Right cardiac atrium (tissue), 5 donors: ENCODE measurements at regions of chr7 and their contacts with region 1.

Region 1: DNA sequence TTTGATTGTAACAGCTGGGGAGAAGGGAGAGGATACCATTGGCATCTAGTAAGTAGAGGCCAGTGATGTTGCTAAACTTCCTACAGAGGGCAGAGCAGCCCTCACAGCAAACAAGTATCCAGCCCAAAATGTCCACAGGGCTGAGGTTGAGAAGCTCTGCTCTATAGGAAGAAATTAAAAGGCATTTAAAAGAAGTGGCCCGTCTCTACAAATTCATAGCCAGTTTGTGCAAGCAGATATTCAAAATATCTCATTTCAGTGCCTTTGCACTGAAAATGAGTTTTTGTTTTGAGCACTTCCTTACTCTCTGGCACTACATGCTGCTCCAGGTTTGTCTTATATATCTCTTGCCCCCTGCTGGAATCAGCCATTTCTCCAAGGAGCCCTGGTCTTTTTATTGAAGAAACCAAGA is 330.0 kb downstream of the BBS9 start:
- DNase-seq: no peak
- ATAC-seq: peak; percentile 85 to 89
- H3K4me3 ChIP-seq: no peak overlapping the region
- H3K27ac ChIP-seq: no peak overlapping the region
- H3K4me1 ChIP-seq: no peaks in the 10 kb centered on the region
- H3K27me3 ChIP-seq: no peaks in the 10 kb centered on the region

Region 2: GRCh38 chr7:33744293-33745075 is 285.1 kb after region 1 on chr7:
- intact Hi-C with region 1: loop called in 1 of 4 experiments (anchors 10 kb)
- DNase-seq: no peak
- ATAC-seq: peak in 1 of 2 donors; percentile 44
- H3K4me3 ChIP-seq: no peak overlapping the region
- H3K27ac ChIP-seq: no peak overlapping the region
- H3K4me1 ChIP-seq: peaks cover 4% of the 10 kb centered on the region
- H3K27me3 ChIP-seq: no peaks in the 10 kb centered on the region